CD4-positive, alpha-beta memory T cell (primary cell): ENCODE measurements at regions of chr9 and their contacts with region 1.

Region 1: DNA sequence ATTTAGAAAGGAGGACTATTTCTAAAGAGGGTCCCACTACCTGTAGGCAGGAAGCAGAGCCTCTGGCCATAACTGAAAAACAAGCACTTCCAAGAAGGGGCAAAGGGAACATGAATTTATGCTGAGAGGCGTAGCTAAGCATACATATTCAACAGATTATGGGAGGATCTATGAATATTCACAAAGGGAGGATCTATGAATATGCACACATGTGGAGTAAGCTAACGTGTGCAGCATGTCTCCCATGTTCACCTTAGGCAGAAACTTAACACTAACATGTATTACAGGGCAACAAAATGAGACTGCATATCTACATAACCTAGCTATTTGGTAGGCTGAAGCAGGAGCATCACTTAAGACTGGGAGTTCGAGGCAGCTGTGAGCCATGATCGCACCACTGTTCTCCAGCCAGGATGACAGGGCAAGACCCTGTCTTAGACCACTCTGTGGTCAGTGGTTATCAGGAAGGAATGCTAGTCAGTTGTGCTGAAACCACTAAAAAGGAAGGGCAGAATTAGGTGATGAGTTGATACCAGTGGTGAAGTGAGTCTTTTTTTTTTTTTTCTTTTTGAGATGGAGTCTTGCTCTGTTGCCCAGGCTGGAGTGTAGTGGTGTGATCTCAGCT is 20.8 kb downstream of the FXN start:
- DNase-seq: no peak
- H3K4me3 ChIP-seq: no peak overlapping the region
- H3K4me3 Mint-ChIP-seq: no peak overlapping the region
- H3K27ac ChIP-seq: no peak overlapping the region
- H3K27ac Mint-ChIP-seq: peak overlapping the region in 1 of 7 donors; percentile 76
- H3K4me1 ChIP-seq: no peaks in the 10 kb centered on the region
- H3K4me1 Mint-ChIP-seq: peaks cover 0 to 5% (median 0%) of the 10 kb centered on the region in 4 donors
- H3K27me3 ChIP-seq: no peaks in the 10 kb centered on the region
- H3K27me3 Mint-ChIP-seq: no peaks in the 10 kb centered on the region

Region 2: DNA sequence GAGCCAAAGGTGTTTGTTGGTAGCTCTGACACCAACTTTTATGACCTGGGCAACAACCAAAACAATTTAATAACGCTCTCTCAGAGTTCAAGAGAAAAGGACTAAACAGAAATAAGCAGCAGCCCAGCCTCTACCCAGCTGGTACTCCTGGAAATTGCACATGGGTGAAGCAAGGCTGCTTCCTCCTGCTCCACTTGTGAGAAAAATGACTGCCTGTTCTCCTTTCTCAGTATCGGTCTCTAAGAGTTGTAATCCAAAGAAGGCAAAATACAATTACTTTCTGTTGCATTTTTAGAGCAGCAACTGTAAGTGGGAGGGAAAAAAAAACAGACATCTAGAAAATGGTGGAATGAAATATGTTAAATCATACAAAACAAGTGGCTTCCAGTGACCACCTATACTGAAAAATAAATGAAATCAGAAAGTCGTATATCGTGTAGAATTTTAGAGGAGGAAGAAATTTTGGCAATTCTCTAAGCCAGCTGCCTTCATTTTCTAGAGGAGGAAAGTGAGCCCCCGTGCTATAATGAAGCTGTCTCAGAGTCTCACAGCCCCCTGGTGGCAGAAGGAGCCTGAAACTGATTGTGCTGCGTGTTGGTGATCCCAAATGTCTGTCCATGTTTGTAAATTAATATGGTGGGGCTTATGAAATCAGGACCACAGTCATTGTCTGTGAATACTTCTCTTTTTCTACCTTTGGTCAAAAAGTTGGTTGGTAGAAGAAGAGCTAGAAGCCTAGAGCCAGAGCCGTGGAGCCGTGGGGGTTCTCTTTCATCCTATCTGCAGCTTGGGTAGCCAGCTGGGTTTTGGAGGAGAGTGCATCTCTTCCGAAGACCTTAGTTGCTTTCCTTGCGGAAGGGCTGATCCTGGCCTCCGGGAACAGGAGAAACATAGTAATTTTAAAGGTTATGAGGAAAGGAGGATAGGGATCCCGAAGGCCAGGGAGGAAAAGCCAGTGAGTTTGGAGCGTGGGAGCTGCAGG is 211.4 kb before region 1 on chr9:
- CTCF ChIA-PET with region 1: no interaction called
- POLR2A ChIA-PET with region 1: no interaction called
- intact Hi-C with region 1: no loop called
- DNase-seq: no peak
- H3K4me3 ChIP-seq: no peak overlapping the region
- H3K4me3 Mint-ChIP-seq: no peak overlapping the region
- H3K27ac ChIP-seq: no peak overlapping the region
- H3K27ac Mint-ChIP-seq: no peak overlapping the region
- H3K4me1 ChIP-seq: no peaks in the 10 kb centered on the region
- H3K4me1 Mint-ChIP-seq: no peaks in the 10 kb centered on the region
- H3K27me3 ChIP-seq: no peaks in the 10 kb centered on the region
- H3K27me3 Mint-ChIP-seq: peaks cover 0 to 2% of the 10 kb centered on the region in 2 donors

Region 3: GRCh38 chr9:69044240-69045219 is 11.8 kb before region 1 on chr9:
- CTCF ChIA-PET with region 1: interaction called, 11 read pairs
- POLR2A ChIA-PET with region 1: no interaction called
- intact Hi-C with region 1: no loop called
- DNase-seq: no peak
- H3K4me3 ChIP-seq: no peak overlapping the region
- H3K4me3 Mint-ChIP-seq: no peak overlapping the region
- H3K27ac ChIP-seq: no peak overlapping the region
- H3K27ac Mint-ChIP-seq: peak overlapping the region in 5 of 7 donors; percentile 7 to 66 (median 33)
- H3K4me1 ChIP-seq: peaks cover 5% of the 10 kb centered on the region
- H3K4me1 Mint-ChIP-seq: peaks cover 15 to 37% (median 33%) of the 10 kb centered on the region in 4 donors
- H3K27me3 ChIP-seq: no peaks in the 10 kb centered on the region
- H3K27me3 Mint-ChIP-seq: no peaks in the 10 kb centered on the region

Region 4: GRCh38 chr9:69180670-69181069 is 124.4 kb after region 1 on chr9:
- CTCF ChIA-PET with region 1: interaction called, 15 read pairs
- POLR2A ChIA-PET with region 1: no interaction called
- intact Hi-C with region 1: no loop called
- DNase-seq: peak; percentile 26 to 68 (median 36)
- H3K4me3 ChIP-seq: no peak overlapping the region
- H3K4me3 Mint-ChIP-seq: peak overlapping the region in 3 of 8 donors; percentile 17 to 43 (median 20)
- H3K27ac ChIP-seq: no peak overlapping the region
- H3K27ac Mint-ChIP-seq: peak overlapping the region; percentile 5 to 74 (median 61)
- H3K4me1 ChIP-seq: peaks cover 29% of the 10 kb centered on the region
- H3K4me1 Mint-ChIP-seq: peaks cover 16 to 54% (median 34%) of the 10 kb centered on the region in 4 donors
- H3K27me3 ChIP-seq: no peaks in the 10 kb centered on the region
- H3K27me3 Mint-ChIP-seq: no peaks in the 10 kb centered on the region

Region 5: GRCh38 chr9:69190086-69190862 is 134.0 kb after region 1 on chr9:
- CTCF ChIA-PET with region 1: interaction called, 250 read pairs
- POLR2A ChIA-PET with region 1: interaction called, 5 read pairs
- intact Hi-C with region 1: no loop called
- DNase-seq: no peak
- H3K4me3 ChIP-seq: no peak overlapping the region
- H3K4me3 Mint-ChIP-seq: no peak overlapping the region
- H3K27ac ChIP-seq: no peak overlapping the region
- H3K27ac Mint-ChIP-seq: no peak overlapping the region
- H3K4me1 ChIP-seq: peaks cover 9% of the 10 kb centered on the region
- H3K4me1 Mint-ChIP-seq: peaks cover 2 to 10% (median 7%) of the 10 kb centered on the region in 4 donors
- H3K27me3 ChIP-seq: no peaks in the 10 kb centered on the region
- H3K27me3 Mint-ChIP-seq: no peaks in the 10 kb centered on the region

Region 6: GRCh38 chr9:69199769-69200470 is 143.6 kb after region 1 on chr9:
- CTCF ChIA-PET with region 1: interaction called, 250 read pairs
- POLR2A ChIA-PET with region 1: interaction called, 3 read pairs
- intact Hi-C with region 1: no loop called
- DNase-seq: no peak
- H3K4me3 ChIP-seq: no peak overlapping the region
- H3K4me3 Mint-ChIP-seq: peak overlapping the region in 6 of 8 donors; percentile 5 to 65 (median 37)
- H3K27ac ChIP-seq: no peak overlapping the region
- H3K27ac Mint-ChIP-seq: no peak overlapping the region
- H3K4me1 ChIP-seq: peaks cover 10% of the 10 kb centered on the region
- H3K4me1 Mint-ChIP-seq: peaks cover 12 to 23% (median 18%) of the 10 kb centered on the region in 4 donors
- H3K27me3 ChIP-seq: no peaks in the 10 kb centered on the region
- H3K27me3 Mint-ChIP-seq: no peaks in the 10 kb centered on the region

Region 7: GRCh38 chr9:69549310-69550202 is 493.3 kb after region 1 on chr9:
- CTCF ChIA-PET with region 1: no interaction called
- POLR2A ChIA-PET with region 1: no interaction called
- intact Hi-C with region 1: loop called (anchors 2 kb)
- DNase-seq: peak in 4 of 5 donors; percentile 36 to 45 (median 38)
- H3K4me3 ChIP-seq: no peak overlapping the region
- H3K4me3 Mint-ChIP-seq: peak overlapping the region in 6 of 8 donors; percentile 5 to 49 (median 33)
- H3K27ac ChIP-seq: no peak overlapping the region
- H3K27ac Mint-ChIP-seq: peak overlapping the region in 1 of 7 donors; percentile 26
- H3K4me1 ChIP-seq: no peaks in the 10 kb centered on the region
- H3K4me1 Mint-ChIP-seq: peaks cover 0 to 6% (median 4%) of the 10 kb centered on the region in 4 donors
- H3K27me3 ChIP-seq: no peaks in the 10 kb centered on the region
- H3K27me3 Mint-ChIP-seq: peaks cover 4 to 6% of the 10 kb centered on the region in 2 donors

Region 8: DNA sequence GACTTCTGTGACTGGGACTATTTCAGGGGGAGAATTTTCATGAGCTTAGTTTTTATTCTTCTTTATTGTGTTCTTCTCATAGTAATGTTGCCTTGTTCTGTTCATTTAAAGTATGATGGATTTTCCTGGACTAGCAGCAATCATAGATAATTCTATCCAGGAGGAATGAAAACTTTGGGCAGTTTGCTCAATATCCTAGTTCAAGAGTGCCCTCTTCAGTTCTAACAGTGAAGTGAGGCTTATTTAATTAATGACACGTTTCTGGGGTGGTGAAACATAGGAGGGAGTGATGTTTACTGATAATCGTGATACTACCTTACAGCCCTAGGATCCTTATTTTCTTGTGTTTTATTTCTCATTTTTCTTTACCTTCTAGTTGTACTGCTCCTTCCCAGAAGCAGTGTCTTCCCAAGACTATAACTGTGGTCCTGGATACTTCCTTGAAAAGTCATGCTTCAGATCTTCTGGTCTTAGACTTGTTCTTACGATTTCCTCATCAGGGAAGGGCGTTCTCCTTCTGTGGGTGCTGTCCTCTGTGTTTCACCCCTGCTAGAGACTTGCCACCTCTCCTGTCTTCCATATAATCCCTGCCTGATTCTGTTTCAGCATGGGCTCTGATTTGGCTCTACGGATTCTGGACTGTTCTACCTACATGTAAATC is 821.7 kb after region 1 on chr9:
- CTCF ChIA-PET with region 1: no interaction called
- POLR2A ChIA-PET with region 1: no interaction called
- intact Hi-C with region 1: loop called (anchors 5 kb)
- DNase-seq: peak in 3 of 5 donors; percentile 0 to 16 (median 4)
- H3K4me3 ChIP-seq: no peak overlapping the region
- H3K4me3 Mint-ChIP-seq: no peak overlapping the region
- H3K27ac ChIP-seq: no peak overlapping the region
- H3K27ac Mint-ChIP-seq: peak overlapping the region in 1 of 7 donors; percentile 1
- H3K4me1 ChIP-seq: no peaks in the 10 kb centered on the region
- H3K4me1 Mint-ChIP-seq: no peaks in the 10 kb centered on the region
- H3K27me3 ChIP-seq: no peaks in the 10 kb centered on the region
- H3K27me3 Mint-ChIP-seq: peaks cover 2% of the 10 kb centered on the region in 2 donors